ENCODE measurements at regions of chr6 and their contacts with region 1.

Region 1: DNA sequence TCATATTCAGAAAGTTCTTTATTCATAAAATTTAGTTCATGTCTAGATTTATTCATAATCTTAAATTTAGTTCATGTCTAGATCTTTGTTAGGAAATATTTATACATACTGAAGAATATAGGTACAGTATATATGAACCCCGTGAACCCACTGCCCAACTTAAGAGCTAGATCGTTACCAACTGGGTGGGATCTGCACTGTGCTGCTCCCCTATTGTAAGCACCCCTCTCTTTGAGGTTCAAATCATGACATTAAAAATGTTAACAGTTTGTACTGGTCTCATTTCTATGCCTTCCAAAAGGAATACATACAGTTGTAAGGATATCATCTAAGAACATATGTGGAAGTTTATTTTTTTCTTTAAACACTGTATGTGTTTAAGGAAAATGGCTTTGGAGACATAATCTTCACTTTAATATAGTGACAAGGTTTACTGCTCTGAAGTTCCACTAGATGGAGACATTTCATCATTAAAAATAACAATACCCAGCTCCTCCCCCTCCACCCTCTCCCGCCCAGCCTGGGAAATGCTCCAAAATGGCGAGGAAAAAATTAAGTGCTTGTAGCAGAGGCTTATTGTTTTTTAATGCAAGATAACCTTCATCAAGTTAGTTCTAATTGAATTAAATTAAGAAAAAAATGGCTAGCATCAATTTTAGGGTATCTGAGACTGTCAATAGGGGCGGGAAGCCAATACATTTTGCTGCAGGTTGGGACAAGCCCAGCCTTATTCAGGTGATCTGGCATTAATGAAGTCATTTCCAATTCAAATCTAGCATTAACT is 104.1 kb upstream of the TRAF3IP2 start:
- DNase-seq: peak; percentile 53 to 63 (median 62)
- H3K4me3 ChIP-seq: no peak overlapping the region
- H3K4me3 Mint-ChIP-seq: no peak overlapping the region
- H3K27ac ChIP-seq: peak overlapping the region in 1 of 2 donors; percentile 22
- H3K27ac Mint-ChIP-seq: no peak overlapping the region
- H3K4me1 ChIP-seq: peaks cover 3 to 4% of the 10 kb centered on the region in 2 donors
- H3K4me1 Mint-ChIP-seq: peaks cover 3% of the 10 kb centered on the region
- H3K27me3 ChIP-seq: no peaks in the 10 kb centered on the region
- H3K27me3 Mint-ChIP-seq: peaks cover 0 to 2% (median 0%) of the 10 kb centered on the region in 3 donors
- CTCF ChIP-seq: peak; percentile 72

Region 2: GRCh38 chr6:111614833-111615582 is 94.8 kb before region 1 on chr6:
- intact Hi-C with region 1: no loop called
- DNase-seq: no peak
- H3K4me3 ChIP-seq: no peak overlapping the region
- H3K4me3 Mint-ChIP-seq: no peak overlapping the region
- H3K27ac ChIP-seq: no peak overlapping the region
- H3K27ac Mint-ChIP-seq: peak overlapping the region in 1 of 7 donors; percentile 34
- H3K4me1 ChIP-seq: peaks cover 0 to 7% of the 10 kb centered on the region in 2 donors
- H3K4me1 Mint-ChIP-seq: peaks cover 18% of the 10 kb centered on the region
- H3K27me3 ChIP-seq: no peaks in the 10 kb centered on the region
- H3K27me3 Mint-ChIP-seq: peaks cover 0 to 2% (median 0%) of the 10 kb centered on the region in 3 donors
- CTCF ChIP-seq: no peak

Region 3: DNA sequence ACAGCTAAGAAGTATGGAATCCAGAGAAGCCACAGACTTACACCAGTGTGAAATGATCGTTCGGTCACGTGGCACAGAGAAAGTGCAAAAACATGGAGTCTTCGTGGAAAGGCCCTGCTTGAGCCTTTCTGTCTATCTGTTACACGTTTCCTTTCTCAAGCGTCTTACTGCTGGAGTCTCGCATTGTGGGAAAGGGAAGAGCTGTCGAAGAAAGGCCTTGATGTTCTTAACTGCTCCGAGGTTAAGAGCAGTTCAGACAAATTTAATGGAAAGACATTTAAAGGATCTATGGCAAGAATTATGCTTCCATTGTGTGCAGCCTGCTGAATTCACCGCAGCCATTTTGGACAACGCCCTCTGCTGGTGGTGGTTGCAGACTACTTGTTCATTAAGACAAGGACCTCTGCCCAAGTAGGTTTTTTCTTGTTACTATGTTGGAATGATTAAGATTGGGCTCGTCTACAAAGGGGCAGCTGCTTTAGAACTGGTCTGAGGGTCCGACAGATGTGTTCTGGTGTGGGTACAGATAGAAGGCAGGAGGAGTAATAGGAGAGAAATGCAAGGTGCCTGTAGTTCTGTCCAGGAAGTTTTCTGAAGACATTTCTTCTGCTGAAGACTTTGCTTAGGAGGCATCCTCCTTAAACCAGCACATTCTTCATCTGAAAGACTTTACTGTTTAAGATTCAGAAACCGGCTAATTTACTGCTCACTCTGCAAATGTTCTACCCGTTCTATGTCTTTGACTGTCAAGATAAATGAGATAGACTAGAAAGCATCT is 319.4 kb after region 1 on chr6:
- intact Hi-C with region 1: loop called (anchors 2 to 5 kb)
- DNase-seq: peak; percentile 61 to 73 (median 72)
- H3K4me3 ChIP-seq: no peak overlapping the region
- H3K4me3 Mint-ChIP-seq: no peak overlapping the region
- H3K27ac ChIP-seq: no peak overlapping the region
- H3K27ac Mint-ChIP-seq: peak overlapping the region in 1 of 7 donors; percentile 82
- H3K4me1 ChIP-seq: no peaks in the 10 kb centered on the region
- H3K4me1 Mint-ChIP-seq: no peaks in the 10 kb centered on the region
- H3K27me3 ChIP-seq: no peaks in the 10 kb centered on the region
- H3K27me3 Mint-ChIP-seq: peaks cover 0 to 2% (median 2%) of the 10 kb centered on the region in 3 donors
- CTCF ChIP-seq: peak; percentile 83

Region 4: GRCh38 chr6:112043032-112044007 is 333.5 kb after region 1 on chr6:
- intact Hi-C with region 1: loop called in 1 of 2 experiments (anchors 5 kb)
- DNase-seq: peak; percentile 76 to 83 (median 81)
- H3K4me3 ChIP-seq: peak overlapping the region; percentile 82 to 96 (median 92)
- H3K4me3 Mint-ChIP-seq: peak overlapping the region; percentile 85 to 95
- H3K27ac ChIP-seq: peak overlapping the region; percentile 46 to 90
- H3K27ac Mint-ChIP-seq: peak overlapping the region; percentile 87 to 94 (median 93)
- H3K4me1 ChIP-seq: peaks cover 3 to 7% of the 10 kb centered on the region in 2 donors
- H3K4me1 Mint-ChIP-seq: peaks cover 10% of the 10 kb centered on the region
- H3K27me3 ChIP-seq: no peaks in the 10 kb centered on the region
- H3K27me3 Mint-ChIP-seq: peaks cover 0 to 3% (median 0%) of the 10 kb centered on the region in 3 donors
- CTCF ChIP-seq: peak; percentile 92

Region 5: DNA sequence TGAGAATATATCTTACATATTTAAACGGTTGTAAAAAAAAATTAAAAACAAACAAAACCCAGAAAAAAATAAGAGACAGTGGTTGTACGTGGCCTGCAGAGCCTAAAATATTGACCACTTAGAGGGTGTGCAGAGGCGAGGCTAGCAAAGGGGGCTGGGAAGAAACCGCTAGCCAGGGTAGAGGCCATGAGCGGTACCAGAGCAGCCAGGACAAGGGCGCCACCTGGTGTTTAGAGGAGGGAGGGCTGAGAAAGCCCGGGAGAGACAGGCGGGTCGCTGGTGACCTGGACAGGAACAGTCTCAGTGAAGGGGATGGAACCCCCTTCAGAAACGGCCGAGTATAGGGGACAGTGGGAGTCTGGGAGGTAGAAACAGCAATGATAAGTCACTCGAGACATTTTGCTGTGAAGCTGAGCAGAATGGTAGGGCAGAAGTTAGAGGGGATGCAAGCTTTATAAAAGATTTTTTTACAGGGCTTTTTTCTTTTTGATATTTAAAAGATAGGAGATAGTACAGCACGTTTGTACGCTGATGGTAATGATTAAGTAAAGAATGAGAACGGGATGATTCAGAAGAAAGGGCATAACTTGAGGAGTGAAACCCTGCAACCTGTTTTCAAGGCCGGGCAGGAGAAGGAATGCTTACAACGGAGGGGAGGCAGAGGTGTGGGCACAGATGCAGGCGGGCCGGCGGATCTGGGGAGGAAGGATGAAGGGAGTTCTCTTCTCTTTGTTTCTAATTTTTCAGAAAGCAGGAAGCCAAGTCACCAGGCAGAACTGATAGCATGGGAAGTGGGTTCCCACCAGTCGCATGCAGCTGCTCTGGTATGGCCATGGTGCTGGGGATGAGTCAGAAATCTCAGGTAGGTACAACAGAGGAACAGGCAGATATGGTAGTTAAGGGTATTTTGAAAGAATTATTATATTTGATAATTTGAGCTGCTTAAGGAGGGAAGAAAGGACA is 453.8 kb after region 1 on chr6:
- intact Hi-C with region 1: loop called (anchors 5 to 10 kb)
- DNase-seq: peak; percentile 42 to 61 (median 58)
- H3K4me3 ChIP-seq: no peak overlapping the region
- H3K4me3 Mint-ChIP-seq: peak overlapping the region in 1 of 2 donors; percentile 79
- H3K27ac ChIP-seq: no peak overlapping the region
- H3K27ac Mint-ChIP-seq: no peak overlapping the region
- H3K4me1 ChIP-seq: peaks cover 0 to 2% of the 10 kb centered on the region in 2 donors
- H3K4me1 Mint-ChIP-seq: peaks cover 9% of the 10 kb centered on the region
- H3K27me3 ChIP-seq: peaks cover 16 to 17% of the 10 kb centered on the region in 2 donors
- H3K27me3 Mint-ChIP-seq: peaks cover 17 to 19% (median 17%) of the 10 kb centered on the region in 3 donors
- CTCF ChIP-seq: peak; percentile 85

Measured in CD14-positive monocyte (primary cell).